Dendritic cell treated with granulocyte-macrophage colony-stimulating factor and Interleukin-4, amounts not matched to agents 40 ng/mL and 50 ng/mL, for 4 days (primary cell): ENCODE measurements at regions of chr3 and their contacts with region 1.

Region 1: DNA sequence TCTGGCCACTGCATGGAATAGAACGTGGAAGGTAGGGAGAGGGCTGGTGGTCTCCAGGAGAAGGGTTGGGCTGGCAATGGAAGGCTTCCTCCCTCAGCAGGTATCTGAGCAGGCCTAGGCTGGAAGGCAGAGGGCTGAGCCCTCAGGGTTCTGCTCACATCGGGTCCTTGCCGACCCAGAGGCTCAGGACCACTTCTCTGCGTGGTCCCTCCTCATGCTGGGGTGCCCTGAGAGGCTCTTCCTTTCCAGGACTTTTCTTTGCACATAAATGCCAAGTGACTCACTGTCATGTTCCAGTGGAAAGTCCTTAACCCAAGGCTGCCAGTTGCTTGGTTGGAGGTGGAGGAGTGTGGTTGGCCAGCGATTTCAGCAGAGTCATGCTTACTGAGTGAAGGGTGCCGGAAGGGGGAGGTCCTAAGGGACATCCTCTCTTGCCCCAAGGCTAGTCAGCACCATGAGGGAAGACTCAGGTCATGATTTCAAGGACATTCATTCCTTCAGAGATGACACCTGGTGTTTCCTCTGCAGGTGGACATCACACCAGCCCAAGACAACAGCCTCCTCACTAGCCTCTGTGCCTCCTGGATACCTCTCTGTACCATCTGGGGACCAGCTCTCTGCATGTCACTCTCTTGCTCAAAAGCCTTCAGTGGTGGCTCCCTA is 8.2 kb downstream of the SLC6A6 start:
- H3K4me3 Mint-ChIP-seq: peak overlapping the region; percentile 62
- H3K27ac Mint-ChIP-seq: peak overlapping the region; percentile 88
- H3K4me1 Mint-ChIP-seq: peaks cover 98% of the 10 kb centered on the region
- H3K27me3 Mint-ChIP-seq: no peaks in the 10 kb centered on the region

Region 2: GRCh38 chr3:14431892-14432834 is 21.5 kb after region 1 on chr3:
- intact Hi-C with region 1: loop called (anchors 2 kb)
- H3K4me3 Mint-ChIP-seq: peak overlapping the region; percentile 49
- H3K27ac Mint-ChIP-seq: peak overlapping the region; percentile 93
- H3K4me1 Mint-ChIP-seq: peaks cover 96% of the 10 kb centered on the region
- H3K27me3 Mint-ChIP-seq: no peaks in the 10 kb centered on the region